ENCODE measurements at regions of chr9 and their contacts with region 1.

Region 1: DNA sequence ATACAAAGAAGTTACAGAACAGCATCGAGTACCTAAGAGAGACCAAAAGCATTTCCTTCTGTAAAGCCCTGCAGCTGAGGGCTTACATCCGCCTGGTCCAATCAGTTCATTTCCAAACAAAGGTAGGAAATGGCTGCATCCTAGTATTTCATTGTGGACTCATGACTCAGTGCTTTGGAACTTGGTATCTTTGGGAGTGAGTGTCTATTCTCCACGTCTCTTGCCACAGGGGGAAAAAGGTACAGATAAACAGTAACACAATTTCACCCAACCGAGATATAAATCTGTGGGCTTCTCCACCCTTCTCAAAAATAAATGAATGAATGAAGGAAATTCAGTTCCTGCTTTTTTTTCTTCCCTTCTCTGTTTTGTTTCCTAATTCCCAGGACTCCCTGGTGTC is 75.4 kb downstream of the NFIB start:
- DNase-seq: peak; percentile 40
- ATAC-seq: peak; percentile 78
- H3K4me3 ChIP-seq: no peak overlapping the region
- H3K27ac ChIP-seq: no peak overlapping the region
- H3K4me1 ChIP-seq: peaks cover 13% of the 10 kb centered on the region
- H3K27me3 ChIP-seq: no peaks in the 10 kb centered on the region
- CTCF ChIP-seq: no peak
- EP300 ChIP-seq: no peak
- POLR2A ChIP-seq: no peak
- RAD21 ChIP-seq: no peak

Region 2: GRCh38 chr9:13615660-13616490 is 622.7 kb before region 1 on chr9:
- CTCF ChIA-PET with region 1: no interaction called
- POLR2A ChIA-PET with region 1: no interaction called
- in situ Hi-C with region 1: no loop called
- intact Hi-C with region 1: no loop called
- DNase-seq: no peak
- ATAC-seq: no peak
- H3K4me3 ChIP-seq: no peak overlapping the region
- H3K27ac ChIP-seq: no peak overlapping the region
- H3K4me1 ChIP-seq: no peaks in the 10 kb centered on the region
- H3K27me3 ChIP-seq: no peaks in the 10 kb centered on the region
- CTCF ChIP-seq: no peak
- EP300 ChIP-seq: no peak
- POLR2A ChIP-seq: no peak
- RAD21 ChIP-seq: no peak

Region 3: GRCh38 chr9:14296495-14297113 is 58.1 kb after region 1 on chr9:
- CTCF ChIA-PET with region 1: no interaction called
- POLR2A ChIA-PET with region 1: no interaction called
- in situ Hi-C with region 1: loop called (anchors 10 kb)
- intact Hi-C with region 1: no loop called
- DNase-seq: no peak
- ATAC-seq: no peak
- H3K4me3 ChIP-seq: no peak overlapping the region
- H3K27ac ChIP-seq: no peak overlapping the region
- H3K4me1 ChIP-seq: peaks cover 51% of the 10 kb centered on the region
- H3K27me3 ChIP-seq: no peaks in the 10 kb centered on the region
- CTCF ChIP-seq: no peak
- EP300 ChIP-seq: no peak
- POLR2A ChIP-seq: no peak
- RAD21 ChIP-seq: no peak

Measured in HepG2 (cell line).